ENCODE measurements at regions of chr10 and their contacts with region 1.

Region 1: DNA sequence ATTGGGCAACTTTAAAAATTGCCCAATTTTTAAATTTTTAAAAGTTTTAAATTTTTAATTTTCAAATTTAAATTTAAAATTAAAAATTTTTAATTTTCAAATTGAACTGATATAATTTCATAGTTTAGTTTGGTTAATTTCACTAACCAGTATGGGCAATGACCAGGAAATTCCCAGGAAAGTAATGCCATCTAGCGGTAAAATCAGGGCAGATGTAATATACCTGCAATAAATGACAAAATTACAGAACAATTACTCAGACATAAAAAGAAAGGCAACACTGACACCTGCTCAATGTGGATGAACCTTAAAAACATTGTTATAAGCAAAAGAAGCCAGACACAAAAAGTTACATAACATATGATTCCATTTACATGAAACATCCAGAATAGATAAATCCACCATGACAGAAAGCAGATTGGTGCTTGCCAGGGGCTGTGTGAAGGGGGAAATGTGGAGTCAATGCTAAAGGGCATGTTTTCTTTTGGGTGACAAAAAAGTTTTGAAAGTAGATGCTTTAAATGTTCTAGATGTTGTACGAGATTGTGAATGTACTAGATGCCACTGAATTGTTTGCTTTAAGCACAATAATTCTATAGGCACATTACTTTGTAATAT is 28.6 kb upstream of the SLC16A12 start:
- DNase-seq: no peak
- H3K4me3 ChIP-seq: no peak overlapping the region
- H3K27ac ChIP-seq: no peak overlapping the region
- H3K4me1 ChIP-seq: peaks cover 4 to 13% of the 10 kb centered on the region in 2 donors
- H3K27me3 ChIP-seq: no peaks in the 10 kb centered on the region
- CTCF ChIP-seq: peak; percentile 33 to 92 (median 68)
- POLR2A ChIP-seq: no peak

Region 2: DNA sequence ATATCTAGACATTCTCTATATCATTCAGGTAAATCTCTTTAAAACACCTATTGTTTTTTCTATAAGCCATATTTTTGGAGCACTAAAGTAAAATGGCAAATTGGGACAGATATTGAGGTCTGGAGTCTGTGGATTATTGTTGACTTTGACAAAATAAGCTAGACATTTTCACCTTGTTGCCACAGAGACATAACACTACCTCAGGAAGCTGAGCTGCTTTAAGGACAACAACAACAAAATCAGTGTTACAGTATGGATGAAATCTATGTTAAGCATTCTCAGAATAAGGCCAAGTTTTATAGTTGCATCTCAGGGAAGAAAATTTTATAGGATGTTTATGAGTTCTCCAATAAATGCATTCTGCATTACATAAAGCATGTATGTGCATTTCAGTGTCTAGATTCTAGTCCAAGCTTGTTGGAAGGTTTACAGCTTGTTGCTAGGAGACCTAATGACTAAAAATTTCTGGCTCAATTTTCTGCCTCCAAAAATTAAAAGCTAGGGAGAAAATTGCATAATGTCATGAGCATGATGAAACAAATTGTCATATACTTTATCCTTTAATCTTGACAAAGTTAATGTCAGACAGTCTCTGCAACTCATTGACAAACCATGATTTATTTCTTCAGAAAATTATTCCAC is 743.1 kb before region 1 on chr10:
- intact Hi-C with region 1: no loop called
- DNase-seq: no peak
- H3K4me3 ChIP-seq: no peak overlapping the region
- H3K27ac ChIP-seq: no peak overlapping the region
- H3K4me1 ChIP-seq: no peaks in the 10 kb centered on the region
- H3K27me3 ChIP-seq: no peaks in the 10 kb centered on the region
- CTCF ChIP-seq: no peak
- POLR2A ChIP-seq: no peak

Region 3: GRCh38 chr10:89029785-89030437 is 534.1 kb before region 1 on chr10:
- intact Hi-C with region 1: loop called (anchors 10 kb)
- DNase-seq: peak; percentile 67 to 76
- H3K4me3 ChIP-seq: no peak overlapping the region
- H3K27ac ChIP-seq: no peak overlapping the region
- H3K4me1 ChIP-seq: peaks cover 9 to 13% of the 10 kb centered on the region in 2 donors
- H3K27me3 ChIP-seq: no peaks in the 10 kb centered on the region
- CTCF ChIP-seq: peak; percentile 59 to 89 (median 84)
- POLR2A ChIP-seq: no peak

Region 4: GRCh38 chr10:89414146-89414878 is 149.7 kb before region 1 on chr10 and contains the start of gene IFIT5:
- intact Hi-C with region 1: no loop called
- DNase-seq: peak; percentile 72 to 75
- H3K4me3 ChIP-seq: peak within 1 kb of the TSS; percentile 77 to 94 (median 77)
- H3K27ac ChIP-seq: peak within 1 kb of the TSS; percentile 98 to 100 (median 99)
- H3K4me1 ChIP-seq: peaks cover 0 to 15% of the 10 kb centered on the region in 2 donors
- H3K27me3 ChIP-seq: no peaks in the 10 kb centered on the region
- CTCF ChIP-seq: no peak
- POLR2A ChIP-seq: peak; percentile 7 to 80
- total RNA-seq, gene IFIT5: 13.7 to 23.0 (median 17.1) TPM

Region 5: DNA sequence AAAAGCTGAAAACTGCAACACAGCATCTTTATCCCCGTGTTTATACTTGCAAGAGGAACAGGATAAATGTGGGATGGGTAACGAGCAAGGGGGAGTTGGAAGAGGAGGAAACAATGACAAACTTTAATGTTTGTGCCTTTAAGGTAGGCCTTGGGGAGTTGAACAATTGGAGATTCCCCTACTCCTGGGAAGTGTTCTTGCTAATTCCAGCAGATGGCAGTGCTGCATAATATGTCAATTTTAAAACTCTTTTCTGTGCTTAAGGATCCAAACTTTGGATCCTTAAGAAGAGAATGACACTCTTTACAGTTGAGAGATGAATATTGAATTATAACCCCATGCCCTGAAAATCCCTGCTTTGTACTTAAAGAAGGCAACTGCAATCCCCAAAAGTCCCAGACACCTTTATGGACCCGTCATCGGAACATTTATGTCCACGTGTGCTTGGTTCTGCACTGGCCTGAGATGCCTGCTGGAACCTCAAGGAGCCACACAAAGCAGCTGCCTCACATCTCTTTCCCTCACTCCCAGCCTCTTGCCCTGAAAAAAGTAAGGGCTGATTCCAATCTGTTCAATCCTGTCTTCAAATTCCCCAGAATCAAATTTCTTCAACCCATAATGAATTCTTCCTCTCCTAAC is 137.6 kb before region 1 on chr10:
- intact Hi-C with region 1: loop called (anchors 5 kb)
- DNase-seq: no peak
- H3K4me3 ChIP-seq: no peak overlapping the region
- H3K27ac ChIP-seq: no peak overlapping the region
- H3K4me1 ChIP-seq: peaks cover 4 to 13% of the 10 kb centered on the region in 2 donors
- H3K27me3 ChIP-seq: no peaks in the 10 kb centered on the region
- CTCF ChIP-seq: peak; percentile 46 to 91 (median 84)
- POLR2A ChIP-seq: no peak

Measured in thyroid gland (tissue), 4 donors.